HCT116 (cell line): ENCODE measurements at regions of chr14 and their contacts with region 1.

Region 1: GRCh38 chr14:39232554-39233415 is 930 bp upstream of the MIA2 start:
- DNase-seq: no peak
- ATAC-seq: peak; percentile 76
- H3K4me3 ChIP-seq: peak overlapping the region in 1 of 2 experiments; percentile 36; a peak in 2 of 4 replicates
- H3K27ac ChIP-seq: no peak overlapping the region
- H3K4me1 ChIP-seq: peaks cover 13 to 30% of the 10 kb centered on the region in 2 experiments; a peak in 3 of 4 replicates
- H3K27me3 ChIP-seq: no peaks in the 10 kb centered on the region
- CTCF ChIP-seq: no peak
- POLR2A ChIP-seq: no peak
- RAD21 ChIP-seq: no peak

Region 2: DNA sequence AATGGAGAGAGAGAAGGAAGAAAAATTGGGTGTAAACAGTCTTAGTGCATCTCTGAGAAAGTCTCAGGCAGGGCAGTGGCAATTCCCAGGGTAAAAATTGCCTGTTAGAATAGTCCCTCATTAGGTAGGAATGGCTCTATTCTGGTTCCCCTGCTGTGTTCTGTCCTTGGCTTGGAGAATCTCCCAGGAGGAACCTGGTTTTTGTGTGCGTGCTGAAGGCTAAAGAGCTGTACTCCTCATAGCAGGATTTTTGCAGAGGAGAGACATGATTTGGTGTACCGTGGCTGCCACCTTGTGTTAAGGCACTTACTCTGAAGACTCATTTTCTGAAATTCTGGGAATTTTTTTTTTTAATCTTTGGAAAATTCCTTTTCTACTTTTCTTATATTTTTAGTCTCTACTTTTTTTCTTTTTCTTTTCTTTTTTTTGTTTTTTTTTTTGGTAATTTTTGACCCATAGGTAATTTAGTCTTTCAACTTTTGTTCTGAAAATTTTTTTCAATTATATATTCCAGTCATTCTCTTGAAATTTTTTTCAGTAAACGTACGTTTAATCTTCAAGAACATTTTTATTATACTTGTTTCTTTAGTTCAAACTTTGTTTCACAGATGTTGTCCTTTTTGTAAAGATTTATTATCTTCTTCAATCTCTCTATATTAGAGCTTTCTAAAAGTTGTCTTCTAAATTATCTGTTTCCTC is 135.6 kb after region 1 on chr14:
- CTCF ChIA-PET with region 1: interaction called, 3 read pairs
- POLR2A ChIA-PET with region 1: no interaction called
- RAD21 ChIA-PET with region 1: interaction called in 1 of 2 experiments, 3 read pairs
- intact Hi-C with region 1: loop called (anchors 1 kb)
- DNase-seq: peak; percentile 44
- ATAC-seq: peak; percentile 72
- H3K4me3 ChIP-seq: no peak overlapping the region
- H3K27ac ChIP-seq: no peak overlapping the region
- H3K4me1 ChIP-seq: no peaks in the 10 kb centered on the region
- H3K27me3 ChIP-seq: no peaks in the 10 kb centered on the region
- CTCF ChIP-seq: peak; percentile 52 to 67 (median 62); a peak in 5 of 6 replicates
- POLR2A ChIP-seq: no peak
- RAD21 ChIP-seq: peak; percentile 84

Region 3: DNA sequence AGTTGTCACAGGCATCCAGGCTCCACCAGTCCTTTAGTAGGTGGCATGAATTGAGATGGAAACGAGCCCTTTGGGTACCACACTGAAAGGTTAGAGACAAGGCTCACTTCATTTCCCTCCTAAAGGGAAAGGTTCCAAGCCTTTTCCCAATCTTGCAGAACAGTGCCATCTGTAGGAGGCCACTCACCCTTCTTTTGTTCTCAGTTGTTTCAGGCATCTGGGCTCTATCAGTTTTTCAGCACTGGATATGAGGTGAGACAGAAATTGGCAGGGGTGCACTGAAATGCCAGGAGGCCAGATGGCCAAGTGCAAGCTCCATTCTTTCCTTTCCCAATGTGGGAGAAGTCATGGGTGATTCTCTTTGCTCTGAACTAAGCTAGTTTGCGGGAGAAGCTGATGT is 184.2 kb after region 1 on chr14:
- CTCF ChIA-PET with region 1: interaction called, 3 read pairs
- POLR2A ChIA-PET with region 1: no interaction called
- RAD21 ChIA-PET with region 1: no interaction called
- intact Hi-C with region 1: loop called (anchors 5 kb)
- DNase-seq: peak; percentile 6
- ATAC-seq: peak; percentile 74
- H3K4me3 ChIP-seq: no peak overlapping the region
- H3K27ac ChIP-seq: no peak overlapping the region
- H3K4me1 ChIP-seq: no peaks in the 10 kb centered on the region
- H3K27me3 ChIP-seq: no peaks in the 10 kb centered on the region
- CTCF ChIP-seq: peak; percentile 22 to 48 (median 44); a peak in 5 of 6 replicates
- POLR2A ChIP-seq: no peak
- RAD21 ChIP-seq: peak; percentile 54

Region 4: DNA sequence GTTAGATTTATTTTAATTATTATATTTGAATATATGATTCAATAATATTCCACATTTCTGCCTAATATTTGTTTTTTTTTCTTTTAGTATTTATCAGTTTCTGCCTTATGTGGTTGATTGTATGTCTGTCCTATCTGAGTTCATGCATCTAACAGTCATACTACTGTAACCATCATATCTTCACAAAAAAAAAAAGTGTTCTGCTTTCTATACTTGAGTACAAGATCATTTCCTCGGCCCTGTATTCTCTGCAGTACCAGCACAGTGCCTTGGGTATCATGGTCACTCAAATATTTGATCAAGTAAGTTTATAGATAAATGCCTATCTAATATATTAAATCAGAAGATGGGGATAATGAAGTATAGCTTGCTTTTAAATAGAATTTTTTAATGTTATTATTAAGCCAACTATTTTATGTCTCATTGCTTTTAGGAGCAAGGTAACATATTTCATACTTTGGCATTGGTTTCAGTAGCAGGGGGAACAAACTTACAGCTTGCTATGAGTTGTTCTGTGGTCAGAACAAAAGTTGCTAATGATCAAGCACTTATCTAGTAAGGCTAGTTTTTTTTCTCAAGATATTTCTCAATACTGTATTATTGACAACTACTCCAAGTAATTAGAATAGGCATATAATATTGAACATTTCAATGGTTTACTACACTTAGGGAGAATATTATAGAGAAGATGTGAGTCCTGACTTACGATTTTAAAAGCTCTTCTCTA is 489.9 kb after region 1 on chr14:
- CTCF ChIA-PET with region 1: no interaction called
- POLR2A ChIA-PET with region 1: no interaction called
- RAD21 ChIA-PET with region 1: no interaction called
- intact Hi-C with region 1: no loop called
- DNase-seq: no peak
- ATAC-seq: no peak
- H3K4me3 ChIP-seq: no peak overlapping the region
- H3K27ac ChIP-seq: no peak overlapping the region
- H3K4me1 ChIP-seq: no peaks in the 10 kb centered on the region
- H3K27me3 ChIP-seq: no peaks in the 10 kb centered on the region
- CTCF ChIP-seq: no peak
- POLR2A ChIP-seq: no peak
- RAD21 ChIP-seq: no peak